A549 (cell line): ENCODE measurements at regions of chr1 and their contacts with region 1.

Region 1: DNA sequence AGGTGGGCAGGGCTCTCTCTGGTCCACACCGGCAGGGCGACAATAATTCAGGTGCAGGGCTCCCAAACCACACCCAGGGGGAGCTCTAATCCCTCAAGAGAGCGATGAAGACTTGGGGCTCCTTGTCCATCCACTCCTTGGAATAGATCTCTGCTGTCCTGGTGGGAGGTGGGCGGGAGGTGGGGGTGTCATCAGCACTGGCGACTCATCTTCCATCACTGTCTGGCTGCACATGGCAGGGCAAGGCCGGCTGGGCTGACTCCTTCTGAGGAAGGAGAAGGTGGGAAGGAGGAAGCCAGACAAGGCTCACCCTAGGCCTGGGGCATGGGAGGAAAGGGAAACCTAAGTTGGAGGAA is 29.3 kb downstream of the TNNT2 start:
- DNase-seq: peak; percentile 64 to 92
- ATAC-seq: peak; percentile 86 to 95
- H3K4me3 ChIP-seq: no peak overlapping the region
- H3K27ac ChIP-seq: no peak overlapping the region
- H3K4me1 ChIP-seq: 0 out of 3 replicates have a peak, but pooled peaks cover 5% of the 10 kb centered on the region
- CTCF ChIP-seq: peak; percentile 67
- EP300 ChIP-seq: no peak
- POLR2A ChIP-seq: no peak
- RAD21 ChIP-seq: peak; percentile 69 to 71

Region 2: GRCh38 chr1:201096035-201096434 is 252.2 kb before region 1 on chr1:
- CTCF ChIA-PET with region 1: no interaction called
- POLR2A ChIA-PET with region 1: no interaction called
- DNase-seq: no peak
- ATAC-seq: no peak
- H3K4me3 ChIP-seq: no peak overlapping the region
- H3K27ac ChIP-seq: no peak overlapping the region
- H3K4me1 ChIP-seq: no peaks in the 10 kb centered on the region
- CTCF ChIP-seq: no peak
- EP300 ChIP-seq: no peak
- POLR2A ChIP-seq: no peak
- RAD21 ChIP-seq: no peak

Region 3: DNA sequence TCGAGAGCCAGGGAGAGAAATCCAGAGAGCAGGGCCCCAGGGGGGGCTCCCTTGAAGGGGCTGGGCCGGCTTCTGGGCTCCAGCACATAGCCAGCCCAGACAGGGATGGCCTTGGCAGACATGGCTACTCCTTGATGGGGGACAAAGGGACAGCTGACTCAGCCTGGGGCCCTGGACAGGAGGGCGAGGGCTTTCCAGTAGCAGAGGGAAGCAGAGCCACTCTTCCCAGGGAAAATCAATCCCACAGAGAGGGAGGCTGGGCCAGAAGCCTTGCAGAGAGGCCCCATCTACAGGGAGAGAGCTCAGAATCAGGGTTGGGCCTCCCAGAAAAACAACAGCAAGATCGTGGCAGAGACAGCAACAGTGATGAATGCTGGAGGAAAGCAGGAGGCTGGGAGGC is 142.0 kb before region 1 on chr1:
- CTCF ChIA-PET with region 1: no interaction called
- POLR2A ChIA-PET with region 1: no interaction called
- DNase-seq: no peak
- ATAC-seq: no peak; a peak in 1 of 6 replicates
- H3K4me3 ChIP-seq: no peak overlapping the region
- H3K27ac ChIP-seq: no peak overlapping the region
- H3K4me1 ChIP-seq: no peaks in the 10 kb centered on the region
- CTCF ChIP-seq: no peak
- EP300 ChIP-seq: no peak
- POLR2A ChIP-seq: no peak
- RAD21 ChIP-seq: no peak

Region 4: DNA sequence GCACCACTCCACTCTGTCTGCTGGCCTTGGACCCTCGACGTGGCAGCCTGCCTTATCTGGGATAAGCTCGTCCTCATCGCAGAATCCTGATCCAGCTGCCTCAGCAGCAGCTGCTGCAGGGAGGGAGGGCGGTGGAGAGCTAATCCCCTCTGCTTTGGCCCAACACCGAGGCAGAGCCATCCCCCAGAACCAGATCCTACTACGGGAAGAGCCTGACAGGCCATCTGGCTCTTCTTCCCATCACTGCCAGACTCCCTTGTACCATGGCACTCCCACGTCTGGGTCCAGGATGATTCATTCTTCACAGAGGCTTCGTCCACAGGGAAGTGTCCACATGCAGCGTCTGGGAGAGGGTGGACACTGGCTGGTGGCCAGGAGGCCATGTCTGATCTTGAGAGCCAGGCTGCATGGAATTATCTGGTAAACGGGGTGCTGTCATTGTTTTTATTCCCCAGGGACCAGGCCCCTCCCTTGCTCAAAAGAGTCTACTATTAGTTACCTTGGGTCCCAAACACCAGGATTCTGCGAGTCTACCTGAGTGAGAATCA is 79.5 kb before region 1 on chr1:
- CTCF ChIA-PET with region 1: interaction called, 61 read pairs
- POLR2A ChIA-PET with region 1: no interaction called
- DNase-seq: peak; percentile 54 to 87
- ATAC-seq: peak; percentile 73 to 84
- H3K4me3 ChIP-seq: no peak overlapping the region
- H3K27ac ChIP-seq: peak overlapping the region; percentile 73 to 90
- H3K4me1 ChIP-seq: peaks cover 48% of the 10 kb centered on the region
- CTCF ChIP-seq: no peak
- EP300 ChIP-seq: no peak
- POLR2A ChIP-seq: no peak
- RAD21 ChIP-seq: no peak

Region 5: DNA sequence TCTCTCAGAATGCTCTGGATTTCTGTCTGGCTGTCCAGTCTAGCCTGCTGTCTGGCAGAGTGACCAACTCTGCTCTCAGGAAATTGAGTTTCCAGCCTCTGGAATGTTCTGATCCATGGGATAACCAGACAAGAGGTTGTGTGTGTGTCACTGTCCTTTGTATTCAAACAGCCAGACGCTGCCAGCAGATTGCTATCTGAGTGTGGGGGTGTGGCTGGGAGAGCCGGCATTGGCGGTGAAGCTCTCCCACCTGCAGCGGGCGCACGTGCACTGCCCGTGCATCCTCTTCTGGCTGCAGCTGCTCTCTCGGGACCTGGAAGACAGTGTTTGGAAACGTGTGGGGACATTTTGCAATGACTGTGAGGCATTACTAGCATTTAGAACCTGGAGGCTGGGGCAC is 38.8 kb before region 1 on chr1:
- CTCF ChIA-PET with region 1: interaction called, 50 read pairs
- POLR2A ChIA-PET with region 1: no interaction called
- DNase-seq: peak; percentile 48 to 62
- ATAC-seq: peak; percentile 31 to 57; a peak in 5 of 6 replicates
- H3K4me3 ChIP-seq: no peak overlapping the region
- H3K27ac ChIP-seq: peak overlapping the region; percentile 59 to 63; a peak in 4 of 6 replicates
- H3K4me1 ChIP-seq: peaks cover 48% of the 10 kb centered on the region
- CTCF ChIP-seq: no peak
- EP300 ChIP-seq: no peak
- POLR2A ChIP-seq: no peak
- RAD21 ChIP-seq: peak in 1 of 2 experiments; percentile 33; a peak in 3 of 5 replicates

Region 6: GRCh38 chr1:201329286-201329685 is 18.9 kb before region 1 on chr1:
- CTCF ChIA-PET with region 1: interaction called, 30 read pairs
- POLR2A ChIA-PET with region 1: no interaction called
- DNase-seq: no peak
- ATAC-seq: no peak
- H3K4me3 ChIP-seq: no peak overlapping the region
- H3K27ac ChIP-seq: no peak overlapping the region
- H3K4me1 ChIP-seq: no peaks in the 10 kb centered on the region
- CTCF ChIP-seq: no peak
- EP300 ChIP-seq: no peak
- POLR2A ChIP-seq: no peak
- RAD21 ChIP-seq: no peak

Region 7: DNA sequence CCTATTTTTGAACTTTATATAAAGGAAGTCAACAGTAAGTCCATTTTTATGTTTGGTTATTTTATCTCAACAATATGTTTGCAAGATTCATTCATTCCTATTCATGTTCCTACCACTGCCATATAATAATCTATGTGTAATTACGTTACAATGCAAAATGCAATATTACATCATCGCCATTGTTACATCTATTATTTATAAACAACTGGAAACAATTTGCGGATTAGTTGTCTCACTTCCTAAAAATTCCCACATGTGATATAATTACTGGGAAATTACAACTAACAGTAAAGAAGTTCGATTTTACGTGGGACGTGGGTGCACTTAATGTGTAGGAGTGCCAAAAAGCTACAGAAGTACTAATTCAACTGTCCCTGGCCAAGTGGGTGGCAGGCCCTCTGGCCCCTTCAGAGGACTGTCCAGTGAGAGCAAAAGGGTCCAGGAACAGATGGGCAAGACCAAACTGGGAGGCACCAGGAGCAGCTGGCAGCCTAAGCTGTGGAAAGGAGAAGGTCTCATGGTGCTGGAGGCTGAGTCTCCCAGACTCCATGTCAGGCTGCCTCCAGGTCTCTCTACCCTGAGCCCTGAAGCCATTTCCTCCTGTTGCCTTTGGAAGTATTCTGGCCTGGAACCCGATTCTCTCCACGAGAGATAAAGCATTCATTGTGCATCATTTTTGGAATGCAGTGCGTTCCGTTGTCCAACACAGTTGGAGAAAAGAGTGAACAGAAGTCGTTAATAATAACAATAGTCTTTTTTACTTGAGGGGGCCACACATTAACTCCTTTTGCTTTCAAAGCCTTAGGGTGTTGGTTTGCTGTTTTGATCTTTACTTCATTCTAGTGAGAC is 13.6 kb before region 1 on chr1:
- CTCF ChIA-PET with region 1: interaction called, 30 read pairs
- POLR2A ChIA-PET with region 1: no interaction called
- DNase-seq: no peak
- ATAC-seq: no peak
- H3K4me3 ChIP-seq: no peak overlapping the region
- H3K27ac ChIP-seq: no peak overlapping the region
- H3K4me1 ChIP-seq: no peaks in the 10 kb centered on the region
- CTCF ChIP-seq: no peak
- EP300 ChIP-seq: no peak
- POLR2A ChIP-seq: no peak
- RAD21 ChIP-seq: no peak

Region 8: GRCh38 chr1:201376464-201377374 is 28.5 kb after region 1 on chr1:
- CTCF ChIA-PET with region 1: interaction called, 10 read pairs
- POLR2A ChIA-PET with region 1: no interaction called
- DNase-seq: peak; percentile 47 to 77
- ATAC-seq: peak; percentile 57 to 88; a peak in 3 of 6 replicates
- H3K4me3 ChIP-seq: no peak overlapping the region
- H3K27ac ChIP-seq: 0 out of 6 replicates have a peak overlapping the region, but pooled peaks of 1 of the 2 experiments have one; percentile 11
- H3K4me1 ChIP-seq: no peaks in the 10 kb centered on the region
- CTCF ChIP-seq: peak; percentile 32
- EP300 ChIP-seq: no peak
- POLR2A ChIP-seq: no peak
- RAD21 ChIP-seq: no peak

Region 9: GRCh38 chr1:201408176-201408833 is 60.1 kb after region 1 on chr1:
- CTCF ChIA-PET with region 1: interaction called, 29 read pairs
- POLR2A ChIA-PET with region 1: no interaction called
- DNase-seq: peak; percentile 80 to 93
- ATAC-seq: peak; percentile 74 to 91
- H3K4me3 ChIP-seq: no peak overlapping the region
- H3K27ac ChIP-seq: peak overlapping the region; percentile 82 to 92
- H3K4me1 ChIP-seq: peaks cover 57% of the 10 kb centered on the region
- CTCF ChIP-seq: peak; percentile 95
- EP300 ChIP-seq: no peak
- POLR2A ChIP-seq: no peak
- RAD21 ChIP-seq: peak; percentile 88